Heart left ventricle (tissue), 16 donors: ENCODE measurements at regions of chr1 and their contacts with region 1.

Region 1: GRCh38 chr1:83931658-83932253 is 67.2 kb downstream of the TTLL7 start:
- DNase-seq: peak in 1 of 5 donors; percentile 10
- ATAC-seq: peak; percentile 58 to 80 (median 66)
- H3K4me3 ChIP-seq: no peak overlapping the region
- H3K27ac ChIP-seq: no peak overlapping the region
- H3K4me1 ChIP-seq: peaks cover 0 to 5% (median 0%) of the 10 kb centered on the region in 12 donors
- H3K27me3 ChIP-seq: no peaks in the 10 kb centered on the region
- CTCF ChIP-seq: peak; percentile 56 to 76 (median 68)
- POLR2A ChIP-seq: no peak

Region 2: DNA sequence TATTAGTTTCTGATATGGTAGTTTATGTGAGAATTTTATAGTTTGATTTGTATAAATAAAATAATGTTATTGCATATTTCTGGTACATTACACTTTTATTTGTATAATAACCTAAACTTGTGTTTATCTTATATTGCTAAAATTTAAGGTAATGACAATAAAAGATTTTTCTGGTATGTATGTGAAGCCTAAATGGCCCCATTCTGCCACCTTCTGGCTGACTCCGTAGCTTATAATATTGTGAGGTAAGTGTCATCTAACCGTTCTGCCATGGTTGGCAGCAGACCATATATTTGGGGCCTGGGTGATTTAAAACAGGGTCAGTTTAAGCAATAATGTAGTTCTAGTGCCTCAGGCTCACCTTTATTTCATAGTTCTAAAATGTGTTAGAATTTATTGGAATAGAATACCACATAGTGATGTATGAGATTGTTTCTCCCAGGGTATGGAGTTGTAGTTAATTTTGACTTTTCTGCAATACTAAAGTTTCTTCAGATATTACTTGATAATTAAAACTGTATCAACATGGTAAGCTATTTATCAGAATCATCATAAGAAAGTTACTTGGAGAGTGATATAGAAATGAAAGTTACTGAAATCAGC is 191.1 kb after region 1 on chr1:
- intact Hi-C with region 1: loop called (anchors 1 to 5 kb)
- DNase-seq: peak in 4 of 5 donors; percentile 15 to 32 (median 31)
- ATAC-seq: peak; percentile 45 to 78 (median 48)
- H3K4me3 ChIP-seq: no peak overlapping the region
- H3K27ac ChIP-seq: no peak overlapping the region
- H3K4me1 ChIP-seq: peaks cover 0 to 21% (median 0%) of the 10 kb centered on the region in 12 donors
- H3K27me3 ChIP-seq: no peaks in the 10 kb centered on the region
- CTCF ChIP-seq: peak; percentile 34 to 74 (median 61)
- POLR2A ChIP-seq: no peak

Region 3: DNA sequence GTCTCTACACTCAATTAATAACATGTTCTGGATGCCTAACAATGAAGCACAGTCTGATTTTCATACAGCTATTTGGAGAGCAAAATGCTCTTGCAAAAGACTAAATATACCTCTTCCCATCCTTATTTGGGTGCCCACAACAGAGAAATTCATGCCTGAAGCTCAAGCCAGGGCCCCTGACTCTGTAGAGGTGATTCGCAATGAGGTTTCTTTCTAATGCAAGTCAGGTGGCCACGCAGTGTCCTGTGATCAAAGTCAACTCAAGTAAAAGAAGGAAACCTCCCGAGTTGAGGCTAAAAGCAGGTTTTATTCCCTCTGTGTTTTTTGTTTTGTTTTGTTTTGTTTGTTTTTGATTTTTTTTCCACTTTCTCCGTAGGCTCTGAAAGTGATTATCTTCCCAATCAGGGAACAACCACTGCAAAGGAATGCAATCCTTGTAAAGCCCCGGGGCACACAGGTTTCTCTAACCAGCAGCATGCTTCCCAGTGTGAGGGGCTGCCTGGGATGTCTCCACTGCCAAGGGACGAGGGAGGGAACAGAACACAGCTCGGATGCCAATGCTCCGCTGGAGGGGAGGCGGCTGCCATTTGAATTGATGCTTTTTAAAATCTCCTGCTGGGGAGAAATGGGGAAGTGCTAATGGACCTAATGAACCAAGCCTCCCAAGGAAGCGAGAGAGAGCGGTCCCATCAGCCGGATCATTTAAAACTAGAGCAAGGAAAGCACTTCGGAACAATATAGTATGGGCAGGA is 832.3 kb after region 1 on chr1:
- intact Hi-C with region 1: loop called in 4 of 10 experiments (anchors 10 kb)
- DNase-seq: no peak
- ATAC-seq: no peak
- H3K4me3 ChIP-seq: no peak overlapping the region
- H3K27ac ChIP-seq: no peak overlapping the region
- H3K4me1 ChIP-seq: peaks cover 0 to 8% (median 0%) of the 10 kb centered on the region in 12 donors
- H3K27me3 ChIP-seq: peaks cover 0 to 7% (median 0%) of the 10 kb centered on the region in 9 donors
- CTCF ChIP-seq: no peak
- POLR2A ChIP-seq: no peak

Region 4: GRCh38 chr1:84772428-84772943 is 840.7 kb after region 1 on chr1:
- intact Hi-C with region 1: loop called in 4 of 10 experiments (anchors 5 to 10 kb)
- DNase-seq: peak; percentile 73 to 79 (median 76)
- ATAC-seq: peak; percentile 78 to 91 (median 88)
- H3K4me3 ChIP-seq: no peak overlapping the region
- H3K27ac ChIP-seq: no peak overlapping the region
- H3K4me1 ChIP-seq: peaks cover 0 to 3% (median 0%) of the 10 kb centered on the region in 12 donors
- H3K27me3 ChIP-seq: peaks cover 0 to 8% (median 0%) of the 10 kb centered on the region in 9 donors
- CTCF ChIP-seq: peak; percentile 82 to 96 (median 94)
- POLR2A ChIP-seq: no peak